GM12878 (cell line): ENCODE measurements at regions of chr2 and their contacts with region 1.

Region 1: GRCh38 chr2:9641641-9642040 is 10.8 kb upstream of the YWHAQ start:
- DNase-seq: no peak
- ATAC-seq: peak; percentile 73
- H3K4me3 ChIP-seq: peak overlapping the region; percentile 28; the same call in 1 of the 2 replicates
- H3K27ac ChIP-seq: no peak overlapping the region
- H3K4me1 ChIP-seq: peaks cover 17% of the 10 kb centered on the region
- H3K27me3 ChIP-seq: peaks cover 3 to 4% of the 10 kb centered on the region in 2 experiments; a peak in 3 of 4 replicates
- CTCF ChIP-seq: no peak
- EP300 ChIP-seq: no peak
- POLR2A ChIP-seq: no peak
- RAD21 ChIP-seq: no peak

Region 2: GRCh38 chr2:9497017-9497416 is 144.6 kb before region 1 on chr2:
- CTCF ChIA-PET with region 1: no interaction called
- POLR2A ChIA-PET with region 1: no interaction called
- RAD21 ChIA-PET with region 1: no interaction called
- SMC1A ChIA-PET with region 1: no interaction called
- in situ Hi-C with region 1: no loop called
- intact Hi-C with region 1: no loop called
- DNase-seq: no peak
- ATAC-seq: no peak
- H3K4me3 ChIP-seq: no peak overlapping the region
- H3K27ac ChIP-seq: no peak overlapping the region
- H3K4me1 ChIP-seq: no peaks in the 10 kb centered on the region
- H3K27me3 ChIP-seq: no peaks in the 10 kb centered on the region
- CTCF ChIP-seq: no peak
- EP300 ChIP-seq: no peak
- POLR2A ChIP-seq: no peak
- RAD21 ChIP-seq: no peak

Region 3: GRCh38 chr2:9656270-9656766 is 14.7 kb after region 1 on chr2:
- CTCF ChIA-PET with region 1: no interaction called
- POLR2A ChIA-PET with region 1: no interaction called
- RAD21 ChIA-PET with region 1: interaction called, 3 read pairs
- SMC1A ChIA-PET with region 1: interaction called, 3 read pairs
- in situ Hi-C with region 1: no loop called
- intact Hi-C with region 1: loop called (anchors 2 kb)
- DNase-seq: peak; percentile 95
- ATAC-seq: peak; percentile 94
- H3K4me3 ChIP-seq: peak overlapping the region; percentile 60
- H3K27ac ChIP-seq: peak overlapping the region; percentile 62
- H3K4me1 ChIP-seq: peaks cover 42% of the 10 kb centered on the region
- H3K27me3 ChIP-seq: no peaks in the 10 kb centered on the region
- CTCF ChIP-seq: no peak
- EP300 ChIP-seq: peak; percentile 93 to 97
- POLR2A ChIP-seq: peak; percentile 30; the same call in 1 of the 2 replicates
- RAD21 ChIP-seq: peak; percentile 39